Activated CD4-positive, alpha-beta T cell treated with anti-CD3 and anti-CD28 coated beads for 36 hours (primary cell): ENCODE measurements at regions of chr20 and their contacts with region 1.

Region 1: GRCh38 chr20:33810885-33811777 is at the start of gene CHMP4B:
- DNase-seq: peak; percentile 99
- ATAC-seq: peak; percentile 93
- H3K4me3 Mint-ChIP-seq: peak within 1 kb of the TSS; percentile 83
- H3K27ac Mint-ChIP-seq: peak within 1 kb of the TSS; percentile 89
- H3K4me1 Mint-ChIP-seq: peaks cover 36% of the 10 kb centered on the region
- H3K27me3 Mint-ChIP-seq: no peaks in the 10 kb centered on the region
- total RNA-seq, gene CHMP4B: 86.0 to 94.1 TPM

Region 2: GRCh38 chr20:33443512-33444239 is 367.5 kb before region 1 on chr20 and contains the start of gene SNTA1:
- CTCF ChIA-PET with region 1: no interaction called
- POLR2A ChIA-PET with region 1: interaction called, 3 read pairs
- intact Hi-C with region 1: loop called in 1 of 2 experiments (anchors 1 kb)
- DNase-seq: peak; percentile 95
- ATAC-seq: peak; percentile 92
- H3K4me3 Mint-ChIP-seq: peak within 1 kb of the TSS; percentile 83
- H3K27ac Mint-ChIP-seq: peak within 1 kb of the TSS; percentile 78
- H3K4me1 Mint-ChIP-seq: peaks cover 15% of the 10 kb centered on the region
- H3K27me3 Mint-ChIP-seq: no peaks in the 10 kb centered on the region
- total RNA-seq, gene SNTA1: 4.2 to 5.0 TPM

Region 3: DNA sequence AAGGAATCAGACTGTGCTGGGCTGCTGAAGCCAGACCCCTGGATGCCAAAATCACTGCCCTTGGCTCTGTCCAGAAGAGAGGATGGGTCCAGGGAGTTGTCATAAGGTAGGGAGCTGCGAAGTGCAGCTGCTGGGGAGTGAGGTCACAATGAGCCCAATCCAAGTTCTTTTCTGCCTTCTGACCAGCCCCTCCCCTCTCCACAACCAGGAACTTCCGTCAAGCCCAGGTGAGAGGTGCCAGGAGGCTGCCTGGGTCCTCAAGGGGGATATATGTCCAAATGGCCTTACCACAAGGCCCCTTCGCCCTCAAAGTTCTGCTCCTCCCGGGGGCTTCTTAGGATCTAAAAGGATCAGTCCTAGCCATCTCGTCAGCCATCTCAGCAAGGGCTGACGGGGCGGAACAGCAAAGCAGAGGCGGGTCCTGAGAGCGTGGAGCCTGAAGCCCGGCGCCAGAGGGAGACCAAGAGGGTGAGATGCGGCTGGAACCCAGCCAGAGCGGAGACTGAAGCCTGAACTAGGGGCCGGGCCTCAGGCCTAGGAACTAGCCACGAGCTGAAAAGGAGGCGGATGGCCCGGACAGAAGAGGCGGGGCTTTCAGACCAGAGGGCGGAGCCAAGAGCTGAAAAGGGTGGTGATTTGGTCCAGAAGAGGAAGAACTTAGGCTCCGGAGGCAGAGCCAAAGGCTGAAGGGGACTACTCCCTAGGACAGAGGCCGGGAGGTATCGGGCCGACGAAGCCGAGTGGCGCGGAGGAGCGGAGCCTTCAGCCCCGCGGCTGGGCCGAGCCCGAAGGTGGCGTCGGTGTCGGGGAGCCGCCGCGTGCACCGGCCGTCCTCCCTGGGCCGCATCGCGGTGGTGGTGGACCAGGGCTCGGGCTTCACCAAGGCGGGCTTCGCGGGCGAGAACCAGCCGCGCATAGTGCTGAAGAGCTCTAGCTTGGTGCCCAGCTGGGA is 144.6 kb before region 1 on chr20 and contains the start of gene ACTL10:
- CTCF ChIA-PET with region 1: interaction called, 3 read pairs
- POLR2A ChIA-PET with region 1: interaction called, 3 read pairs
- intact Hi-C with region 1: loop called in 1 of 2 experiments (anchors 1 kb)
- DNase-seq: peak; percentile 89
- ATAC-seq: peak; percentile 59
- H3K4me3 Mint-ChIP-seq: peak within 1 kb of the TSS; percentile 75
- H3K27ac Mint-ChIP-seq: peak within 1 kb of the TSS; percentile 90
- H3K4me1 Mint-ChIP-seq: peaks cover 31% of the 10 kb centered on the region
- H3K27me3 Mint-ChIP-seq: no peaks in the 10 kb centered on the region
- total RNA-seq, gene ACTL10: 0.91 to 1.7 TPM

Region 4: GRCh38 chr20:33731693-33732165 is 79.4 kb before region 1 on chr20 and contains the start of gene ZNF341:
- CTCF ChIA-PET with region 1: no interaction called
- POLR2A ChIA-PET with region 1: no interaction called
- intact Hi-C with region 1: loop called in 1 of 2 experiments (anchors 1 kb)
- DNase-seq: peak; percentile 94
- ATAC-seq: peak; percentile 90
- H3K4me3 Mint-ChIP-seq: peak within 1 kb of the TSS; percentile 75
- H3K27ac Mint-ChIP-seq: peak within 1 kb of the TSS; percentile 86
- H3K4me1 Mint-ChIP-seq: peaks cover 21% of the 10 kb centered on the region
- H3K27me3 Mint-ChIP-seq: no peaks in the 10 kb centered on the region
- total RNA-seq, gene ZNF341: 4.3 to 6.1 TPM

Region 5: GRCh38 chr20:34302723-34303528 is 491.8 kb after region 1 on chr20 and contains the start of gene AHCY:
- CTCF ChIA-PET with region 1: no interaction called
- POLR2A ChIA-PET with region 1: no interaction called
- intact Hi-C with region 1: loop called in 1 of 2 experiments (anchors 1 kb)
- DNase-seq: peak; percentile 97
- ATAC-seq: peak; percentile 96
- H3K4me3 Mint-ChIP-seq: peak within 1 kb of the TSS; percentile 90
- H3K27ac Mint-ChIP-seq: peak within 1 kb of the TSS; percentile 91
- H3K4me1 Mint-ChIP-seq: peaks cover 18% of the 10 kb centered on the region
- H3K27me3 Mint-ChIP-seq: no peaks in the 10 kb centered on the region
- total RNA-seq, gene AHCY: 183 to 189 TPM

Region 6: GRCh38 chr20:34825530-34826362 is 1014.6 kb after region 1 on chr20 and contains the start of gene NCOA6:
- CTCF ChIA-PET with region 1: no interaction called
- POLR2A ChIA-PET with region 1: no interaction called
- intact Hi-C with region 1: loop called in 1 of 2 experiments (anchors 1 kb)
- DNase-seq: peak; percentile 95
- ATAC-seq: peak; percentile 67
- H3K4me3 Mint-ChIP-seq: peak within 1 kb of the TSS; percentile 86
- H3K27ac Mint-ChIP-seq: peak within 1 kb of the TSS; percentile 95
- H3K4me1 Mint-ChIP-seq: peaks cover 30% of the 10 kb centered on the region
- H3K27me3 Mint-ChIP-seq: no peaks in the 10 kb centered on the region
- total RNA-seq, gene NCOA6: 20.3 to 31.1 TPM